ENCODE measurements at regions of chr3 and their contacts with region 1.

Region 1: GRCh38 chr3:8769088-8769822 is at the start of gene OXTR:
- DNase-seq: peak; percentile 68
- H3K4me3 ChIP-seq: peak within 1 kb of the TSS; percentile 73
- H3K27me3 ChIP-seq: no peaks in the 10 kb centered on the region
- CTCF ChIP-seq: peak; percentile 97
- polyA plus RNA-seq, gene OXTR: 168 and 195 TPM in 2 replicates

Region 2: GRCh38 chr3:8621872-8622271 is 147.4 kb before region 1 on chr3:
- CTCF ChIA-PET with region 1: no interaction called
- POLR2A ChIA-PET with region 1: no interaction called
- DNase-seq: peak; percentile 76
- H3K4me3 ChIP-seq: no peak overlapping the region
- H3K27me3 ChIP-seq: no peaks in the 10 kb centered on the region
- CTCF ChIP-seq: no peak

Region 3: GRCh38 chr3:8663177-8664061 is 105.8 kb before region 1 on chr3:
- CTCF ChIA-PET with region 1: interaction called, 32 read pairs
- POLR2A ChIA-PET with region 1: no interaction called
- DNase-seq: no peak
- H3K4me3 ChIP-seq: no peak overlapping the region
- H3K27me3 ChIP-seq: no peaks in the 10 kb centered on the region
- CTCF ChIP-seq: peak; percentile 75

Region 4: GRCh38 chr3:8851719-8852118 is 82.5 kb after region 1 on chr3:
- CTCF ChIA-PET with region 1: interaction called, 26 read pairs
- POLR2A ChIA-PET with region 1: interaction called, 5 read pairs
- DNase-seq: peak; percentile 89
- H3K4me3 ChIP-seq: no peak overlapping the region
- H3K27me3 ChIP-seq: no peaks in the 10 kb centered on the region
- CTCF ChIP-seq: no peak

Region 5: GRCh38 chr3:8888301-8888915 is 119.2 kb after region 1 on chr3:
- CTCF ChIA-PET with region 1: interaction called, 89 read pairs
- POLR2A ChIA-PET with region 1: interaction called, 9 read pairs
- DNase-seq: peak; percentile 86
- H3K4me3 ChIP-seq: no peak overlapping the region
- H3K27me3 ChIP-seq: no peaks in the 10 kb centered on the region
- CTCF ChIP-seq: no peak

Region 6: GRCh38 chr3:8945890-8946600 is 176.8 kb after region 1 on chr3:
- CTCF ChIA-PET with region 1: interaction called, 14 read pairs
- POLR2A ChIA-PET with region 1: interaction called, 3 read pairs
- DNase-seq: no peak
- H3K4me3 ChIP-seq: no peak overlapping the region
- H3K27me3 ChIP-seq: no peaks in the 10 kb centered on the region
- CTCF ChIP-seq: no peak

Region 7: DNA sequence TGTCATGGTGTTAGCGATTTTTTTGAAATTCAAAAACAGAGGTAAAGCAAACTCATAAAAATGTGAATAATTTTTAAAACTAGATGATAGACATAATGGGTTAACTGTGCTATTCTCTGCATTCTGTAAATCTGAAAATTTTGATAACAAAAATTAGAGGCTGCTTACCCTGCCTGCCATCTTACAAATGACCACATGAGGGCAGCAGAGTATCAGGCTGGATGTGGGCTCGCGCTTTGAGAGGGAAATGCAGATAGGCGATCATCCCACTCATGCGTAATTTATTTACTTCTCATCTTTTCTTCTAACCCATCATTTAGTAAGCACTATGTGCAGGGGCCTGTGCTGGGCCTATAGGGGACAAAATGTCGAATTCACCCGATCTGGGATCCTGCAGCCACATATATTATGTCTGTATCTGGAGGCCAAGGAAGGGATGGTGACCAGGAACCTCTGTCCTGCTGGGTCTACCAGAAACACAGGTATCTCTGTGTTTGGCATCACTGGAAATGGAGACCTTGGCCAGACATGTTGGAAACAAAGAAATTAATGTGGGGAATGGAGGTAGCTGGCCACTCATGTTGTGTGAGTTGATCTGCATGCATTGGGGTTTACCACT is 201.8 kb after region 1 on chr3:
- CTCF ChIA-PET with region 1: interaction called, 17 read pairs
- POLR2A ChIA-PET with region 1: no interaction called
- DNase-seq: no peak
- H3K4me3 ChIP-seq: no peak overlapping the region
- H3K27me3 ChIP-seq: no peaks in the 10 kb centered on the region
- CTCF ChIP-seq: peak; percentile 93

Measured in BJ (cell line).